ENCODE measurements at regions of chr4 and their contacts with region 1.

Region 1: GRCh38 chr4:11428899-11429698 is 405 bp upstream of the HS3ST1 start:
- DNase-seq: peak; percentile 87 to 95
- H3K4me3 ChIP-seq: peak overlapping the region; percentile 89
- H3K27ac ChIP-seq: peak overlapping the region; percentile 90
- H3K4me1 ChIP-seq: peaks cover 27% of the 10 kb centered on the region
- H3K27me3 ChIP-seq: no peaks in the 10 kb centered on the region
- CTCF ChIP-seq: peak; percentile 56

Region 2: GRCh38 chr4:10281996-10282395 is 1147.1 kb before region 1 on chr4:
- CTCF ChIA-PET with region 1: no interaction called
- POLR2A ChIA-PET with region 1: no interaction called
- intact Hi-C with region 1: no loop called
- DNase-seq: no peak
- H3K4me3 ChIP-seq: no peak overlapping the region
- H3K27ac ChIP-seq: no peak overlapping the region
- H3K4me1 ChIP-seq: no peaks in the 10 kb centered on the region
- H3K27me3 ChIP-seq: no peaks in the 10 kb centered on the region
- CTCF ChIP-seq: no peak

Region 3: DNA sequence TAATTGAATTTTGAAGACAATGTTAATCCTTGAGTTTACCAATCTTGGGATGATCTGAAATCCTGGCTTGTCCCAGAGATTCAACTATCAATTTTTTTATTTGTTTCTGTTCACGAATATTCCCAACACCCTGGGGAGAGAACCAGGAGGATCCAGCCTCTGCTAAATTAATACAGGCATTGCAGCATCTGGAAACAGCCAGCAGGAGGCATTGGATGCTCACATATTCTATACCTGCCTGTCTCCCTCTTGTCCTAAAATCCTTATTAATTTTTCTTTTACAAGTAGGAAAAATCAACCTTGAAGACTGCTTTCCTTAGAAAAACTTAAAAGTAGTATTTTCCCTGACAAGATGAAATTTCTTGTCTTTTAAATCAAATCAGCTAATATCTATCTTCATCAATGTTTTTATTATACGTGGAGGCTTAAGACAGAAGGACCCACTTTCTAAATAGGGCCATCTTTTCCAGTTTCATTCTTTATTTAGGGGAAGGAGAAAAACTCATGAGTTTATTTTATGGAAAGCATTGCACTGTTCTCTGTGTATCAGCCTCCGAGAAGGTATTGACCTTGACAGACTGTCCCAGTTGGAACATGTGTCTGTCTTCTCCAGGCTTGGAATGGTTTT is 846.9 kb before region 1 on chr4:
- CTCF ChIA-PET with region 1: no interaction called
- POLR2A ChIA-PET with region 1: no interaction called
- intact Hi-C with region 1: loop called (anchors 5 kb)
- DNase-seq: peak in 1 of 2 experiments; percentile 37
- H3K4me3 ChIP-seq: no peak overlapping the region
- H3K27ac ChIP-seq: no peak overlapping the region
- H3K4me1 ChIP-seq: no peaks in the 10 kb centered on the region
- H3K27me3 ChIP-seq: no peaks in the 10 kb centered on the region
- CTCF ChIP-seq: peak; percentile 85

Region 4: DNA sequence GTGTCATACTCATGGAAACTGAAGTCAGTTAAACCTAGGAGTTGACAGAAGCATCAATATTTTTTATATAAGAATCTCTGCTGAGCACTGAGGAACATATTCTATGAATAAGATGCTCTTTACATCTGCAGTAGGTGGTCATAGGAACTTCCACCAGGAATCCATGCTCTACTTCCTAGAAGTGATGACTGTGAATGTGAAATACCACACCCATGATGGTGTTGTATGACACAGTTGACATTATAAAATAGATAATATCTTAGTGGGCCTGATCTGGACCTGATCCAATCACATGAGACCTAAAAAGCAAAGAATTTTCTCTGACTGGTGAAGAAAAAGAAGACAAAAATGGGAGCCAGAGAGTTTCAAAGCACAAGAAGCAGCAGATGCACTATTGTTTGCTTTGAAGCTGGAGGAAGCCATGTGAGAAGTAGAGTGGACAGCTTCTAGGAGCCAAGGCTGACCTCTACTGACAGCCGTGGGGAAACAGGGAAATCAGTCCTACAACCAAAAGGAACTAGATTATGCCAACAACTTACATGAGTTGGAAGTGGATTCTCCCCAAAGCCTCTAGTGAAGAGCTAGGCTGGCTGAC is 68.2 kb after region 1 on chr4:
- CTCF ChIA-PET with region 1: no interaction called
- POLR2A ChIA-PET with region 1: no interaction called
- intact Hi-C with region 1: loop called (anchors 2 kb)
- DNase-seq: no peak
- H3K4me3 ChIP-seq: no peak overlapping the region
- H3K27ac ChIP-seq: peak overlapping the region; percentile 87
- H3K4me1 ChIP-seq: peaks cover 7% of the 10 kb centered on the region; the same call in 1 of the 2 replicates
- H3K27me3 ChIP-seq: no peaks in the 10 kb centered on the region
- CTCF ChIP-seq: 0 out of 2 replicates have a peak, but pooled peaks have one; percentile 34

Region 5: DNA sequence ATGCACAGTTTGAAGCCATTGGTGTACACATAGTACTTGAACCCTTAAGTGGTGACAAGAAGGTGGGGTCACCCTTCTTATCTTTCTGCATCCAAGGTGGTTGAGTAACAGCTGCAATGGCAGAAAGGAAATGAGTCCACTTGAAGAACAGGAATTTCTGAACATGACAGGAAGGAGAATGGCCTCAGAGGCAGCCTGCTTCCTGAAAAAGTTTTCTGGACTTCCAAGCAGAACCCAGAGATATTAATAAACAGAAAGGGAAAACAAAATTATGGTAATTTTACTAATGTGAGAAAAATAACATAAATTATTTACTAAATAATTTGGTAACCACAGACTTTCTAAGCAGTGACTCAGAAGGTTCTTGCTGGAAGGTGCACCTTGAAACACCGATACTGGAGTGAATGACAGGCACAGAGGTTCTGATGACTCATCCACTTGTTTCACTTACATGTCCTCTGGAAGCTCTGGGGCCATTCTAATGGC is 119.5 kb after region 1 on chr4:
- CTCF ChIA-PET with region 1: no interaction called
- POLR2A ChIA-PET with region 1: no interaction called
- intact Hi-C with region 1: loop called (anchors 2 kb)
- DNase-seq: peak; percentile 29 to 77
- H3K4me3 ChIP-seq: 0 out of 2 replicates have a peak overlapping the region, but pooled peaks have one; percentile 10
- H3K27ac ChIP-seq: peak overlapping the region; percentile 93
- H3K4me1 ChIP-seq: peaks cover 29% of the 10 kb centered on the region
- H3K27me3 ChIP-seq: no peaks in the 10 kb centered on the region
- CTCF ChIP-seq: no peak

Region 6: GRCh38 chr4:11635359-11636072 is 206.4 kb after region 1 on chr4:
- CTCF ChIA-PET with region 1: no interaction called
- POLR2A ChIA-PET with region 1: interaction called, 5 read pairs
- intact Hi-C with region 1: loop called (anchors 2 kb)
- DNase-seq: peak; percentile 71 to 97
- H3K4me3 ChIP-seq: peak overlapping the region; percentile 31; the same call in 1 of the 2 replicates
- H3K27ac ChIP-seq: peak overlapping the region; percentile 99
- H3K4me1 ChIP-seq: peaks cover 51% of the 10 kb centered on the region
- H3K27me3 ChIP-seq: no peaks in the 10 kb centered on the region
- CTCF ChIP-seq: no peak

Region 7: GRCh38 chr4:11720292-11720691 is 291.2 kb after region 1 on chr4:
- CTCF ChIA-PET with region 1: no interaction called
- POLR2A ChIA-PET with region 1: interaction called, 3 read pairs
- intact Hi-C with region 1: loop called (anchors 1 kb)
- DNase-seq: peak in 1 of 2 experiments; percentile 46
- H3K4me3 ChIP-seq: no peak overlapping the region
- H3K27ac ChIP-seq: peak overlapping the region; percentile 41; the same call in 1 of the 2 replicates
- H3K4me1 ChIP-seq: peaks cover 5% of the 10 kb centered on the region
- H3K27me3 ChIP-seq: no peaks in the 10 kb centered on the region
- CTCF ChIP-seq: peak; percentile 76